ENCODE measurements at regions of chr7 and their contacts with region 1.

Region 1: DNA sequence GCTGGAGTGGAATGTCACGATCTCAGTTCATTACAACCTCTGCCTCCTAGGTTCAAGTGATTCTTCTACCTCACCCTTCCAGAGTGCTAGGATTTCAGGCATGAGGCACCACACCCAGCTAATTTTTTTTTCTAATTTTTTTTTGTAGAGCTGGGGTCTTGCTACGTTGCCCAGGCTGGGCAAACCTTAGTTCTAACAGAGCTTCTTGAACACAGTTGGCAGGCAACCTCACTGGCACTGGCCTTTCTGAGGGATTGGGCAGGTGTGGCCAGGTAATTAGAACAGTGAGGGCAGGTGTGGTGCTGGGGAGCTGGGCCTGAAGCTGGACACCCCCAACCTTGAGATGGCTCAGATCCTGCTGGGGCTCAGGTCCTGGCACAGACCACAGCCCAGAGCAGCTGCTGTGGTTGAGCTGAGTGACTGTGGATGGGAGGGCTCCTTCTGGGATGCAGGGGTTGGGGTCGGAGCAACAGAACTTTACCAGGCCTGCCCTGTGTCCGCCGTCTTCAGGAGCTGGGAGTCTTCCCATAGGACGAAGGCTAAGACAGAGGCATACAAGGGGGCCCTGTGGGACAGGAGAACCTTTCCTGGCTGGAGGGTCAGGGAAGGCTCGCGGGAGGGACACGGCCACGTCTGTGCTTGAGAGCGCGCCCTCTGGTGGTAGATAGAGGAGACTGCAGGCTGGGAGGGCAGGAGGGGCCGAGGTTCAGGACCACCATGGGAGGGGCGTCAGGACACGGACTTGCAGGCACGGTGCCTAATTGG is 48.2 kb downstream of the COL26A1 start:
- DNase-seq: peak; percentile 30
- H3K4me3 ChIP-seq: no peak overlapping the region
- H3K27ac ChIP-seq: no peak overlapping the region
- H3K4me1 ChIP-seq: no peaks in the 10 kb centered on the region
- H3K27me3 ChIP-seq: no peaks in the 10 kb centered on the region
- CTCF ChIP-seq: peak; percentile 82 to 91
- POLR2A ChIP-seq: no peak

Region 2: DNA sequence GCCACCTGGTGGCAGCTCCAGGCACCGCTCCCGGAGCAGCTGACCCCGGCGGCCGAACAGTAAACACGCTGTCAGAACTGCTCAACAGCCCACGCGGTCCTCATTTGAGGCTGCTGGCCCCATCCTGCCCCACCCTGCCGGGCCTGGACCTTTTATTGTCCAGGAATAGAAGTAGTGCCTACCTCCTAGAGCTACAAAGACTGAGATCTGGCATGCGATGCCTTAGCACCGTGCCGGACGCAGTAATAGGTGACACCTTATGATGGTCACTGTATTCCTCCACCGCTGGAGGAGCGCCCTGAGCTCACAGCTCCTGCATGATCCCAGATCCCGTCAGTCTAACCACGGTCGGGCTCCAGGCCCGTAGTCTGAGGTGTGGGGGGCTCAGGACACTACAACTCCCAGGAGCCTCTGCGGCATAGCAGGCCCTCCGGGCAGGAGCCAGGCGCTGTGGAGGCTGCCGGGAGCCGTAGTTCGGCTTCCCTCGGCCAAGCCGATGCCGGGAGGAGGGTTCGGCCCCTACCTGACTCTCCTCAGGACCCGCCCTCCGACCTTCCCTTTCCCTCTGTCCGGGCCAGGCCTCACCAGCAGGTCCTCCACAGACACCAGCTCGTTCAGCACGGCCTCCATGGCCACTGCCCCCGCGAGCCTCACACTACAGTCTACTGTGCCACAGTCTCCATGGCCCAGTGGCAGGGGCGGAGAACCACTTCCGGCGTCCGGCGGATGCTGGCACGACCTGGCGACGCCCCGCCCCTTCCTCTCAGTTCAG is 166.4 kb before region 1 on chr7 and contains the start of gene FIS1:
- CTCF ChIA-PET with region 1: no interaction called
- POLR2A ChIA-PET with region 1: no interaction called
- dilution Hi-C with region 1: no loop called
- intact Hi-C with region 1: no loop called
- DNase-seq: peak; percentile 93
- H3K4me3 ChIP-seq: peak within 1 kb of the TSS; percentile 64 to 89 (median 76)
- H3K27ac ChIP-seq: peak within 1 kb of the TSS; percentile 63
- H3K4me1 ChIP-seq: peaks cover 20% of the 10 kb centered on the region
- H3K27me3 ChIP-seq: no peaks in the 10 kb centered on the region
- CTCF ChIP-seq: peak; percentile 95 to 96
- POLR2A ChIP-seq: peak; percentile 96
- total RNA-seq, gene FIS1: 132 and 187 TPM in 2 replicates

Region 3: GRCh38 chr7:101321491-101322401 is 89.2 kb before region 1 on chr7 and contains the start of gene IFT22:
- CTCF ChIA-PET with region 1: interaction called, 13 read pairs
- POLR2A ChIA-PET with region 1: no interaction called
- dilution Hi-C with region 1: no loop called
- intact Hi-C with region 1: no loop called
- DNase-seq: peak; percentile 86
- H3K4me3 ChIP-seq: peak within 1 kb of the TSS; percentile 57 to 86 (median 61)
- H3K27ac ChIP-seq: peak within 1 kb of the TSS; percentile 9
- H3K4me1 ChIP-seq: peaks cover 2% of the 10 kb centered on the region
- H3K27me3 ChIP-seq: no peaks in the 10 kb centered on the region
- CTCF ChIP-seq: peak; percentile 6 to 36
- POLR2A ChIP-seq: peak; percentile 82
- total RNA-seq, gene IFT22: 26.1 and 28.7 TPM in 2 replicates

Region 4: GRCh38 chr7:101422361-101423195 is 11.7 kb after region 1 on chr7:
- CTCF ChIA-PET with region 1: interaction called, 13 read pairs
- POLR2A ChIA-PET with region 1: no interaction called
- dilution Hi-C with region 1: no loop called
- intact Hi-C with region 1: no loop called
- DNase-seq: no peak
- H3K4me3 ChIP-seq: no peak overlapping the region
- H3K27ac ChIP-seq: no peak overlapping the region
- H3K4me1 ChIP-seq: no peaks in the 10 kb centered on the region
- H3K27me3 ChIP-seq: no peaks in the 10 kb centered on the region
- CTCF ChIP-seq: no peak
- POLR2A ChIP-seq: no peak